CD4-positive, alpha-beta T cell (primary cell): ENCODE measurements at regions of chr11 and their contacts with region 1.

Region 1: GRCh38 chr11:65013692-65014145 is 241 bp upstream of the ARL2 start:
- DNase-seq: peak; percentile 66 to 95 (median 82)
- ATAC-seq: peak; percentile 94
- H3K4me3 ChIP-seq: peak overlapping the region; percentile 87
- H3K4me3 Mint-ChIP-seq: peak overlapping the region; percentile 97
- H3K27ac ChIP-seq: peak overlapping the region; percentile 83 to 98
- H3K27ac Mint-ChIP-seq: peak overlapping the region; percentile 96
- H3K4me1 ChIP-seq: peaks cover 26% of the 10 kb centered on the region
- H3K4me1 Mint-ChIP-seq: peaks cover 26% of the 10 kb centered on the region
- H3K27me3 ChIP-seq: no peaks in the 10 kb centered on the region
- H3K27me3 Mint-ChIP-seq: no peaks in the 10 kb centered on the region
- CTCF ChIP-seq: peak; percentile 74

Region 2: GRCh38 chr11:64590763-64591221 is 422.9 kb before region 1 on chr11 and contains the start of gene SLC22A12:
- CTCF ChIA-PET with region 1: no interaction called
- POLR2A ChIA-PET with region 1: no interaction called
- intact Hi-C with region 1: no loop called
- DNase-seq: no peak
- ATAC-seq: no peak
- H3K4me3 ChIP-seq: no peak within 1 kb of the TSS
- H3K4me3 Mint-ChIP-seq: no peak within 1 kb of the TSS
- H3K27ac ChIP-seq: no peak within 1 kb of the TSS
- H3K27ac Mint-ChIP-seq: no peak within 1 kb of the TSS
- H3K4me1 ChIP-seq: no peaks in the 10 kb centered on the region
- H3K4me1 Mint-ChIP-seq: no peaks in the 10 kb centered on the region
- H3K27me3 ChIP-seq: peaks cover 4% of the 10 kb centered on the region in 2 experiments
- H3K27me3 Mint-ChIP-seq: no peaks in the 10 kb centered on the region
- CTCF ChIP-seq: no peak
- total RNA-seq, gene SLC22A12: not detected

Region 3: GRCh38 chr11:65027213-65028067 is 13.7 kb after region 1 on chr11 and contains the start of gene SNX15:
- CTCF ChIA-PET with region 1: interaction called, 30 read pairs
- POLR2A ChIA-PET with region 1: interaction called, 15 read pairs
- intact Hi-C with region 1: loop called (anchors 1 kb)
- DNase-seq: peak; percentile 73 to 97 (median 86)
- ATAC-seq: peak; percentile 94
- H3K4me3 ChIP-seq: peak within 1 kb of the TSS; percentile 53
- H3K4me3 Mint-ChIP-seq: peak within 1 kb of the TSS; percentile 73
- H3K27ac ChIP-seq: peak within 1 kb of the TSS; percentile 22 to 52
- H3K27ac Mint-ChIP-seq: peak within 1 kb of the TSS; percentile 82
- H3K4me1 ChIP-seq: peaks cover 22% of the 10 kb centered on the region
- H3K4me1 Mint-ChIP-seq: peaks cover 21% of the 10 kb centered on the region
- H3K27me3 ChIP-seq: no peaks in the 10 kb centered on the region
- H3K27me3 Mint-ChIP-seq: no peaks in the 10 kb centered on the region
- CTCF ChIP-seq: peak; percentile 86
- total RNA-seq, gene SNX15: 13.9 to 14.7 TPM

Region 4: GRCh38 chr11:65078151-65078550 is 64.4 kb after region 1 on chr11:
- CTCF ChIA-PET with region 1: interaction called, 10 read pairs
- POLR2A ChIA-PET with region 1: no interaction called
- intact Hi-C with region 1: loop called (anchors 1 kb)
- DNase-seq: peak; percentile 60 to 87 (median 72)
- ATAC-seq: peak; percentile 100
- H3K4me3 ChIP-seq: no peak overlapping the region
- H3K4me3 Mint-ChIP-seq: peak overlapping the region; percentile 7
- H3K27ac ChIP-seq: no peak overlapping the region
- H3K27ac Mint-ChIP-seq: peak overlapping the region; percentile 37
- H3K4me1 ChIP-seq: peaks cover 13% of the 10 kb centered on the region
- H3K4me1 Mint-ChIP-seq: peaks cover 13% of the 10 kb centered on the region
- H3K27me3 ChIP-seq: no peaks in the 10 kb centered on the region
- H3K27me3 Mint-ChIP-seq: no peaks in the 10 kb centered on the region
- CTCF ChIP-seq: peak; percentile 71

Region 5: DNA sequence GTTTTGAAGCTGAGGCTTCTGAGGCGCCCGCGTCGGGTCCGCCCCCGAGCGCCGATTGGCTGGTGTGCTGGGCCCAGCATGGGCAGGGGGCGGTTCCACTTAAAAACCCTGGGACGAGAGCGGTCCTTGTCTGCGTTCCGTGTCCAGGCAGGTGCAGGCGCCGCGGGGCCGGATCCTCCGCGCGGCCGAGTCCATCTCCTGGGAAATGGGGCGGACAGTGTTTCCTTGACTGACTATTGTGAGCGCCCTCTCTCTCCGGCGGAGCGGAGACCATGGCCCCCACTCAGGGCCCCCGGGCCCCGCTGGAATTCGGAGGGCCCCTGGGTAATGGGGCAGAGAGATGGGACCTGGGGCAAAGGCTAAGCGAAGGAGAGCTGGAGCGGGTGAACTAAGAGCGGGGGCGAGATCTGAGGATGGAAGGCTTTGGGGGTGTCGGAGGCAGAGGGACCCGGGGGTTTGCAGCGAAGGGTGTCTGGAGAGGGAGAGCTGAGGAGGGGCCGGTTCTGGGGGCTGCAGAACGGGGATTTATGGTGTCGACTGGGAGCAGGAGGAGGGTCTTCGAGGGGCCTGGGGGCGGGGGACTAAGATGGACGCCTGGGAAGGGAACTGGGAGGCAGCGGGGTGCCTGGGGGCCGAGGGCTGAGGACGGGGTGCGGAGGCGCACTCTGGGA is 98.2 kb after region 1 on chr11 and contains the start of gene TM7SF2:
- CTCF ChIA-PET with region 1: interaction called, 13 read pairs
- POLR2A ChIA-PET with region 1: interaction called, 19 read pairs
- intact Hi-C with region 1: loop called in 1 of 2 experiments (anchors 1 kb)
- DNase-seq: peak; percentile 88 to 98 (median 94)
- ATAC-seq: peak; percentile 75
- H3K4me3 ChIP-seq: peak within 1 kb of the TSS; percentile 81
- H3K4me3 Mint-ChIP-seq: peak within 1 kb of the TSS; percentile 95
- H3K27ac ChIP-seq: peak within 1 kb of the TSS; percentile 62 to 68
- H3K27ac Mint-ChIP-seq: peak within 1 kb of the TSS; percentile 92
- H3K4me1 ChIP-seq: peaks cover 63% of the 10 kb centered on the region
- H3K4me1 Mint-ChIP-seq: peaks cover 36% of the 10 kb centered on the region
- H3K27me3 ChIP-seq: no peaks in the 10 kb centered on the region
- H3K27me3 Mint-ChIP-seq: no peaks in the 10 kb centered on the region
- CTCF ChIP-seq: no peak
- total RNA-seq, gene TM7SF2: 20.0 to 20.4 TPM

Region 6: DNA sequence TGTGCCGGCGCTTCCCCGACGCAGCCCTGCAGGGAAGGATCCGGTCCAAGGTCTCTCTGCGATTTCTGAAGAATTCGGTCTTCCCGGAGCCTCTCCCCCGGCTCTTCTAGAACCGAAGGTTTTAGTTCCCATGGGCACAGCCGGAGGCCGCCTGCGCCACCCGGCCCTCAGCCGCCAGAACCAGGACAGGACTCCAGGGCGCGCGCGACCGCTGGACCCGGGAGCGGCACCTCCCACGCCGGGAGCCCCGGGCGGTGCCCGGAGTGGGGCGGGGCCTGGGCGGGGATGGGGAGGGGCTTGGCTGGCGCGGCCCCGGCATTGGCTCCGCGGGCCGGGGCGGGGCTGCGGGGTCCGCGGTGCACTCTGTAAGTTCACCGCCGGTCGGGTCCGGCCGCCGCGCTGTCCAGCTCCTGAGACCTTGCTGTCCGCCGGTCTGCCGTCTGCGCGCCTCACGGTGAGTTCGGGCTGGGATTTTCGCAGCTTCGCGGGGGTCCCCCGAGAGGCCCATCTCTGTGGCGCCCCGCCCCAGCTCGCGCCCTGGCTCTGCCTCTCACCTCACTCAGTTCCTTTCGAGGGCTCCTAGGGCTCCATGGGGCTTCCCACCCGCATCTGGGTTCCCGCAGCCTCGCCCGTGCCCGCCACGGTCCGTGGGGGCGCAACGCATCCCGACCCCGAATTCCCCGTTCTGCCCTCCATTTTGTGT is 300.9 kb after region 1 on chr11 and contains the start of gene CDC42EP2:
- CTCF ChIA-PET with region 1: interaction called, 3 read pairs
- POLR2A ChIA-PET with region 1: no interaction called
- intact Hi-C with region 1: loop called (anchors 5 to 10 kb)
- DNase-seq: peak; percentile 35 to 86 (median 72)
- ATAC-seq: peak; percentile 89
- H3K4me3 ChIP-seq: peak within 1 kb of the TSS; percentile 90
- H3K4me3 Mint-ChIP-seq: peak within 1 kb of the TSS; percentile 86
- H3K27ac ChIP-seq: no peak within 1 kb of the TSS
- H3K27ac Mint-ChIP-seq: no peak within 1 kb of the TSS
- H3K4me1 ChIP-seq: peaks cover 21% of the 10 kb centered on the region
- H3K4me1 Mint-ChIP-seq: peaks cover 12% of the 10 kb centered on the region
- H3K27me3 ChIP-seq: peaks cover 0 to 2% of the 10 kb centered on the region in 2 experiments
- H3K27me3 Mint-ChIP-seq: no peaks in the 10 kb centered on the region
- CTCF ChIP-seq: no peak
- total RNA-seq, gene CDC42EP2: 0.96 TPM in 1 of 2 experiments, not detected in the other

Region 7: GRCh38 chr11:65329944-65330403 is 316.3 kb after region 1 on chr11:
- CTCF ChIA-PET with region 1: no interaction called
- POLR2A ChIA-PET with region 1: no interaction called
- intact Hi-C with region 1: no loop called
- DNase-seq: peak; percentile 56 to 93 (median 79)
- ATAC-seq: peak; percentile 28
- H3K4me3 ChIP-seq: no peak overlapping the region
- H3K4me3 Mint-ChIP-seq: peak overlapping the region; percentile 79
- H3K27ac ChIP-seq: no peak overlapping the region
- H3K27ac Mint-ChIP-seq: peak overlapping the region; percentile 15
- H3K4me1 ChIP-seq: peaks cover 12% of the 10 kb centered on the region
- H3K4me1 Mint-ChIP-seq: peaks cover 21% of the 10 kb centered on the region
- H3K27me3 ChIP-seq: no peaks in the 10 kb centered on the region
- H3K27me3 Mint-ChIP-seq: no peaks in the 10 kb centered on the region
- CTCF ChIP-seq: peak; percentile 97

Region 8: DNA sequence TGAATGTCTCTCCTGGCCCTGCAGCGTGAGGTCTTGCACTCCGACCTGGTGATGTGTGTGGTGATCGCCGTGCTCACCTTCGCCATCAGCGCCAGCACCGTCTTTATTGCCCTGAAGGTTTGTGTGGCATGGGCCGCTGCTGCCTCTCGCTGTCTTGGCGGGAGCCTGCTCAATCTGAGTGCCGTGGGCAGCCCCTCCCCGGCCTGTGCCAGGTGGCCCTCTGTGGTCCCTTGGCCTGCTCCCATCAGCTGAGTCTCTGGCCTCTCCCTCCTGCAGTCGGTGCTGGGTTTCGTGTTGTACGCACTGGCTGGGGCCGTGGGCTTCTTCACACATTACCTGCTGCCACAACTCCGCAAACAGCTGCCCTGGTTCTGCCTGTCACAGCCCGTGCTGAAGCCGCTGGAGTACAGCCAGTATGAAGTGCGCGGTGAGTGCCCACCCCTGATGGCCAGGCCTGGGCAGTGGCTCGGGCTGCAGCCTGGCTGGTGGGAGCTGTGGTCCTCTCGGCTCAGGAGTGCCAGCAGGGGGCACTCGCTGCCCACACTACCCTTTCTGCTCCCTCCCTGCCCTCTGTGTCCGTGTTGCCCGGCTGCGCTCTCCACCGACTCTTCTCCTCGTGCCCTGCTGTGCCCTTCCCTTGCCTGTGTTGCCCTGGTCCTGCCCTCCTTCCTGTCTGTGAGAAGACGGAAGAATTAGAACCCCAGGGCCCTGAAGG is 612.1 kb after region 1 on chr11:
- CTCF ChIA-PET with region 1: no interaction called
- POLR2A ChIA-PET with region 1: no interaction called
- intact Hi-C with region 1: no loop called
- DNase-seq: peak; percentile 42 to 83 (median 54)
- ATAC-seq: peak; percentile 84
- H3K4me3 ChIP-seq: no peak overlapping the region
- H3K4me3 Mint-ChIP-seq: no peak overlapping the region
- H3K27ac ChIP-seq: no peak overlapping the region
- H3K27ac Mint-ChIP-seq: no peak overlapping the region
- H3K4me1 ChIP-seq: peaks cover 9% of the 10 kb centered on the region
- H3K4me1 Mint-ChIP-seq: peaks cover 13% of the 10 kb centered on the region
- H3K27me3 ChIP-seq: no peaks in the 10 kb centered on the region
- H3K27me3 Mint-ChIP-seq: no peaks in the 10 kb centered on the region
- CTCF ChIP-seq: peak; percentile 79